Caco-2 (cell line): ENCODE measurements at regions of chrX and their contacts with region 1.

Region 1: DNA sequence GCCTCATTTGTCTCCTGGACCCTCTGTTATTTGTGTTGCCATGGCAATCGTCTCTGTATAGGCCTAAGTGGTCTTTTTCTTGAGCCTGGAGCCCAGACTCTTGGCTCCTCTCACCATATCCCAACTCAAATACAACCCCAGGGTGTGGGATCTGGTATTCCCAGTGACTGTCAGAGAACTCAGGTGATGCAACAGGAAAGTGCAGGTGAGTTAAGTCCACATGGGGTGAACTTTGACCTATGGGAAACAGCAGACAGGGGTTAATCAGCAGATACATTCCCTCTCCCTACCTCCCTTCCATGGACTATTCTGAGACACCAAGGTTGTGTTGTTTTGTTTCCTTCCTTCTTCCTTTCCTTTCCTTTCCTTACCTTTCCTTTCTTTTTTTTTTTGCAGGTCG is 130.9 kb upstream of the RPS6KA3 start:
- DNase-seq: peak; percentile 45 to 55
- H3K4me3 ChIP-seq: no peak overlapping the region
- H3K4me3 Mint-ChIP-seq: no peak overlapping the region
- H3K27ac Mint-ChIP-seq: peak overlapping the region; percentile 77
- H3K4me1 ChIP-seq: peaks cover 21% of the 10 kb centered on the region
- H3K4me1 Mint-ChIP-seq: peaks cover 15% of the 10 kb centered on the region
- H3K27me3 ChIP-seq: no peaks in the 10 kb centered on the region
- H3K27me3 Mint-ChIP-seq: no peaks in the 10 kb centered on the region
- CTCF ChIP-seq: no peak

Region 2: DNA sequence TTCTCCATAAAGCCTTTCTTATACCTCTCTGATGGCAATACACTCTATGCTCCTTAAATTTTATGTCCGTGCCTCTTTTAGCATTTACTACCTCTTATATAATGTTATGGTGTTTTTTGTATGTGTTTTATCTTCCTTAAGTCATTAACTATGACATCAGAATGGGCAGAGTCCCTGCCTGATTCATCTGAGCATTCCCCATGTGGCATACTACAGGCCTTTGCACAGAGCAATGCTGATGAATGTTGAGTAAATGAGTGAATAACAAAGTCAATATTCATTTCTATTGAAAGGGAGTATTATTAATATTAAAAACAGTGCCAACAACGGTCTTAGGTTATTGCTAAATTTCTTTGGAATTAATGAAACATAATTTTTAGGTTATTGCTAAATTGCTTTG is 112.1 kb before region 1 on chrX:
- CTCF ChIA-PET with region 1: no interaction called
- POLR2A ChIA-PET with region 1: no interaction called
- intact Hi-C with region 1: no loop called
- DNase-seq: no peak
- H3K4me3 ChIP-seq: no peak overlapping the region
- H3K4me3 Mint-ChIP-seq: no peak overlapping the region
- H3K27ac Mint-ChIP-seq: no peak overlapping the region
- H3K4me1 ChIP-seq: peaks cover 5% of the 10 kb centered on the region
- H3K4me1 Mint-ChIP-seq: peaks cover 15% of the 10 kb centered on the region
- H3K27me3 ChIP-seq: no peaks in the 10 kb centered on the region
- H3K27me3 Mint-ChIP-seq: no peaks in the 10 kb centered on the region
- CTCF ChIP-seq: no peak

Region 3: DNA sequence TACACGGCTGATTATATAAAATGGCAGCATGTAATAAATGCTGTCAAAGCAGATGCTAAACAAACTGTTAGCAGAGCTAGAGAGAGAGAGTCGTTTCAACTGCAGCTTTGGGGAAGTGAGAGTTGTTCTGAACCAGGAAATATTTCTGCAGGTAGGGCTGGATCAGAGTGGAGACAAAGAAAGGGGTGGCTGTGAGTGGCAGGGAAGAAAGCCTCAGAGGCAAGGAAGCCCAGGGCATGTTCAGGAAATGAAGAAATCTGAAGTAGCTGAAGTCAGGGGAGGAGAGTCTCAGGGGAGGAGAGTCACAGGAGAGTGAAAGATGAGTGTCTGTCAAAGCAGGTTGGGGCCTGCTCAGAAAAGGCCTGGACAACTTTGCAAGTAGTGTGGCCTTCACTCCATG is 82.4 kb before region 1 on chrX:
- CTCF ChIA-PET with region 1: no interaction called
- POLR2A ChIA-PET with region 1: no interaction called
- intact Hi-C with region 1: no loop called
- DNase-seq: no peak
- H3K4me3 ChIP-seq: no peak overlapping the region
- H3K4me3 Mint-ChIP-seq: no peak overlapping the region
- H3K27ac Mint-ChIP-seq: no peak overlapping the region
- H3K4me1 ChIP-seq: no peaks in the 10 kb centered on the region
- H3K4me1 Mint-ChIP-seq: peaks cover 7% of the 10 kb centered on the region
- H3K27me3 ChIP-seq: no peaks in the 10 kb centered on the region
- H3K27me3 Mint-ChIP-seq: no peaks in the 10 kb centered on the region
- CTCF ChIP-seq: no peak

Region 4: DNA sequence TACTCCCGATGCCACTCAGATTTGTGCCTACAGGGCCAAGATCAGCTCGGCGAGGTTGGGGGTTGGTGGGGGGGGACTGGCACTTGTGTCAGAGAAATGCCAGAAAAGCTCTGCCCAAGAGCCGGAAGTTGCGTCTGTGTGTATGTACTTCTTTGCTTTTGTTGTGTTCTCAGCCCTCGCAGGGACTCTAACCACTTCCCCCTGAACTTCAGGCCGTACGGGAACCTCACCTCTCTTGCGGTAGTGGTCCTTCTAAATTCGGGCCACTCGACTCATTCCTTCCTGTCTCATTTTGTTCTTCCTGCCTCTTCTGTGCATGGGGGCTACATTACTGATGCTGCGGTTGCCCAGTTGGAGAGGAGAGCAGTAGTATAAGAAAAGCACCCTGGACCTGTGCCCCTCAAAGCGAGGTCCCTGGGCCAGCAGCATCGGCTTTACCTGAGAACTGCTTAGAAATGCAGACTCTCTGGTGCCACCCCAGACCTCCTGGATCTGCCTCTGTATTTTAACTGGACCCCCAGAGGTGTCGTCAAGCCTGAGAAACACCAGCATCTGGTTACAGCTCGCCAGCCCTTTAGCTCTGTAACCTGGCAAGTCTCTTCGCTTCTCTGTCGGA is 15.4 kb after region 1 on chrX:
- CTCF ChIA-PET with region 1: no interaction called
- POLR2A ChIA-PET with region 1: no interaction called
- intact Hi-C with region 1: no loop called
- DNase-seq: no peak
- H3K4me3 ChIP-seq: no peak overlapping the region
- H3K4me3 Mint-ChIP-seq: no peak overlapping the region
- H3K27ac Mint-ChIP-seq: no peak overlapping the region
- H3K4me1 ChIP-seq: no peaks in the 10 kb centered on the region
- H3K4me1 Mint-ChIP-seq: no peaks in the 10 kb centered on the region
- H3K27me3 ChIP-seq: no peaks in the 10 kb centered on the region
- H3K27me3 Mint-ChIP-seq: no peaks in the 10 kb centered on the region
- CTCF ChIP-seq: no peak

Region 5: GRCh38 chrX:20432746-20433387 is 35.3 kb after region 1 on chrX:
- CTCF ChIA-PET with region 1: no interaction called
- POLR2A ChIA-PET with region 1: no interaction called
- intact Hi-C with region 1: loop called (anchors 5 kb)
- DNase-seq: no peak
- H3K4me3 ChIP-seq: no peak overlapping the region
- H3K4me3 Mint-ChIP-seq: no peak overlapping the region
- H3K27ac Mint-ChIP-seq: no peak overlapping the region
- H3K4me1 ChIP-seq: peaks cover 42% of the 10 kb centered on the region
- H3K4me1 Mint-ChIP-seq: peaks cover 6% of the 10 kb centered on the region
- H3K27me3 ChIP-seq: no peaks in the 10 kb centered on the region
- H3K27me3 Mint-ChIP-seq: no peaks in the 10 kb centered on the region
- CTCF ChIP-seq: no peak

Region 6: DNA sequence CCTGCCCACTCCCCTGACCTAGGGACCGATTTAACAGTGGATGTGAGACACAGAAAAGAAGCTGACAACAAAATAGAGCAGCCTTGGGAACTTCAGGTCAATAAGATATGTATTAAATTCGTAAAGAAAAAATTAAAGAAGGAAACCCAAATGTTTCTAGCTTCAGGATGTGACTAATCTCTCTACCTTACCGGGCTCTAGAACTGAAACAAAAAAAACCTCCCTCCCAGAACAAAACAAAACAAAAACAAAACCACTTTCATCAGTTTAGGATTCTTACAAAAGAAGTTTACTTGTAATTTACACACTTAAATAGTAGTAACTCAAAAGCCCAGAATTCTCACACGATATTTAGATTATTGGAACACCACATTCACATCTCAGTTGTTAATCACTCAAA is 54.9 kb after region 1 on chrX:
- CTCF ChIA-PET with region 1: no interaction called
- POLR2A ChIA-PET with region 1: no interaction called
- intact Hi-C with region 1: no loop called
- DNase-seq: no peak
- H3K4me3 ChIP-seq: no peak overlapping the region
- H3K4me3 Mint-ChIP-seq: no peak overlapping the region
- H3K27ac Mint-ChIP-seq: no peak overlapping the region
- H3K4me1 ChIP-seq: no peaks in the 10 kb centered on the region
- H3K4me1 Mint-ChIP-seq: no peaks in the 10 kb centered on the region
- H3K27me3 ChIP-seq: no peaks in the 10 kb centered on the region
- H3K27me3 Mint-ChIP-seq: no peaks in the 10 kb centered on the region
- CTCF ChIP-seq: no peak